Activated naive CD4-positive, alpha-beta T cell treated with anti-CD3 and anti-CD28 coated beads for 36 hours (primary cell): ENCODE measurements at regions of chr1 and their contacts with region 1.

Region 1: DNA sequence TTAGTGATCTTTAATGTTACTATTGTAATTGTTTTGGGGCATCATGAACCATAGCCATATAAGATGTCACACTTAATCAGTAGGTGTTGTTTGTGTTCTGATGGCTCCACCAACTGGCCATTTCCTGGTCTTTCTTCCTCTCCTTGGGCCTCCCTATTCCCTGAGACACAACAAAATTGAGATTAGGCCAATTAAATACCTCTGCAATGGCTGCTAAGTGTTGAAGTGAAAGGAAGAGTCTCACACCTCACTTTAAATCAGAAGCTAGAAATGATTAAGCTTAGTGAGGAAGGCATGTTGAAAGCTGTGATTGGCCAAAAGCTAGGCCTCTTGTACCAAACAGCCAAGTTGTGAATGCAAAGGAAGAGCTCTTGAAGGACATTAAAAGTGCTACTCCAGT is 30.7 kb downstream of the PPP2R5A start:
- DNase-seq: peak; percentile 49
- H3K4me3 Mint-ChIP-seq: no peak overlapping the region
- H3K27ac Mint-ChIP-seq: peak overlapping the region; percentile 2
- H3K4me1 Mint-ChIP-seq: peaks cover 40% of the 10 kb centered on the region
- H3K27me3 Mint-ChIP-seq: no peaks in the 10 kb centered on the region

Region 2: GRCh38 chr1:211775170-211775569 is 540.7 kb before region 1 on chr1:
- CTCF ChIA-PET with region 1: no interaction called
- intact Hi-C with region 1: no loop called
- DNase-seq: no peak
- H3K4me3 Mint-ChIP-seq: no peak overlapping the region
- H3K27ac Mint-ChIP-seq: no peak overlapping the region
- H3K4me1 Mint-ChIP-seq: no peaks in the 10 kb centered on the region
- H3K27me3 Mint-ChIP-seq: no peaks in the 10 kb centered on the region

Region 3: GRCh38 chr1:212062832-212063438 is 253.0 kb before region 1 on chr1:
- CTCF ChIA-PET with region 1: interaction called, 3 read pairs
- intact Hi-C with region 1: loop called (anchors 5 kb)
- DNase-seq: no peak
- H3K4me3 Mint-ChIP-seq: no peak overlapping the region
- H3K27ac Mint-ChIP-seq: no peak overlapping the region
- H3K4me1 Mint-ChIP-seq: no peaks in the 10 kb centered on the region
- H3K27me3 Mint-ChIP-seq: no peaks in the 10 kb centered on the region

Region 4: GRCh38 chr1:212302745-212303383 is 13.0 kb before region 1 on chr1:
- CTCF ChIA-PET with region 1: no interaction called
- intact Hi-C with region 1: loop called (anchors 2 kb)
- DNase-seq: no peak
- H3K4me3 Mint-ChIP-seq: no peak overlapping the region
- H3K27ac Mint-ChIP-seq: no peak overlapping the region
- H3K4me1 Mint-ChIP-seq: peaks cover 49% of the 10 kb centered on the region
- H3K27me3 Mint-ChIP-seq: no peaks in the 10 kb centered on the region